CD4-positive, alpha-beta T cell (primary cell): ENCODE measurements at regions of chr9 and their contacts with region 1.

Region 1: DNA sequence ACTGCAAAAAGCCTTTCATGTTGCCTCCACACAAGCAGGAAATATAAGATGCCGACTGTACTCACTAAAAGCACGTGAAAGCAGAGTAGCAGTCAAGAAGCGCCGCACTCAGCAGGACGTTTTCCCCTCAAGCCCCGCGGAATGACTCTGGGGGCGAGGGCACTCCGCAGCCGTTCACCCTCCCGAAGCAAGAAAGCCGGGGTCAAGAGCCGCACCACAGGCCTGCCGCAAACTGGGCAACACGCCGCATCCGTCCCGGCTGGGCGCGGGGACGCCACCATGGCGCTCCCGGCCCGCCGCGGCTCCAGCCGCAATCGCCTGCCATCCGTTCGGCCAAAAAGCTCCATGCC is 364 bp downstream of the RPS6 start:
- DNase-seq: peak in 8 of 14 experiments; percentile 23 to 73 (median 36)
- ATAC-seq: peak; percentile 49
- H3K4me3 ChIP-seq: peak overlapping the region; percentile 60
- H3K4me3 Mint-ChIP-seq: peak overlapping the region; percentile 90
- H3K27ac ChIP-seq: peak overlapping the region; percentile 88 to 90
- H3K27ac Mint-ChIP-seq: peak overlapping the region; percentile 94
- H3K4me1 ChIP-seq: peaks cover 23% of the 10 kb centered on the region
- H3K4me1 Mint-ChIP-seq: peaks cover 52% of the 10 kb centered on the region
- H3K27me3 ChIP-seq: no peaks in the 10 kb centered on the region
- H3K27me3 Mint-ChIP-seq: no peaks in the 10 kb centered on the region
- CTCF ChIP-seq: no peak

Region 2: DNA sequence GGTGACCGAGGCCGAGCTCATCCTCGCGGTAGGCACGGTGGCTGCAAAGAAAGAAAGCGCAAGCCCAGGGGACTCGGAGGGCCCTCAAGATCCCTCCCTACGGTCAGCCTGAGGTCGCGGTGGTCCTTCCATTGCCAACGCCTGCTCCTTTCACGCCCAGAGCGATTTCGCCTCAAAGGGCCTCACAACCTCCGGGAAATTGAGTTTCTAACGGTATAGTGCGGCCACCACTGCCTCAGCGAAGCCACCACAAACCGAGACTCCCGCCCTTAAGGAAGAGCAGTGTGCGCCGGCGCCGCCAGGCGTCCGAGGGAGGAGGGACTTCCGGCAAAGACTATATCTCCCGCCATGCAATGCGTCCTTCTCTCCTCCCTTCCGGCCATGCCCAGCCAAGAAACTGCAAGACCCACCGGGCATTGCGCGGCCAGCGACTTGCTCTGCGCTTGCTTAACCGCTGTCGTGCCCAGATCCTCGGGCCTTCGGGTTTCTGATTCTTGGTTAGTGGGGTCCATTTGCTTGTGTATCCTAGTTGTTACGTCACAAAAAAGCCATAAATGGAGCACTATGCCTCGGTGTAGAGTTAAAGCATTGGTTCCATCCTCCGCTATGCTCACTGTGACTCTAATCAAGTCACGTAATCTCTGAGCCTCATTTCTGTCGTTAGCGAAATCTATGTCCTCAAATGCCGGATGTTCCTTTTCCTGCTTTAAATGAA is 276.9 kb before region 1 on chr9 and contains the start of gene HAUS6:
- CTCF ChIA-PET with region 1: no interaction called
- POLR2A ChIA-PET with region 1: no interaction called
- intact Hi-C with region 1: loop called in 1 of 2 experiments (anchors 2 kb)
- DNase-seq: peak; percentile 81 to 99 (median 92)
- ATAC-seq: peak; percentile 89
- H3K4me3 ChIP-seq: peak within 1 kb of the TSS; percentile 85
- H3K4me3 Mint-ChIP-seq: peak within 1 kb of the TSS; percentile 99
- H3K27ac ChIP-seq: peak within 1 kb of the TSS; percentile 81 to 85
- H3K27ac Mint-ChIP-seq: peak within 1 kb of the TSS; percentile 98
- H3K4me1 ChIP-seq: peaks cover 20% of the 10 kb centered on the region
- H3K4me1 Mint-ChIP-seq: peaks cover 31% of the 10 kb centered on the region
- H3K27me3 ChIP-seq: no peaks in the 10 kb centered on the region
- H3K27me3 Mint-ChIP-seq: no peaks in the 10 kb centered on the region
- CTCF ChIP-seq: peak; percentile 35
- total RNA-seq, gene HAUS6: 14.9 to 17.2 TPM

Region 3: DNA sequence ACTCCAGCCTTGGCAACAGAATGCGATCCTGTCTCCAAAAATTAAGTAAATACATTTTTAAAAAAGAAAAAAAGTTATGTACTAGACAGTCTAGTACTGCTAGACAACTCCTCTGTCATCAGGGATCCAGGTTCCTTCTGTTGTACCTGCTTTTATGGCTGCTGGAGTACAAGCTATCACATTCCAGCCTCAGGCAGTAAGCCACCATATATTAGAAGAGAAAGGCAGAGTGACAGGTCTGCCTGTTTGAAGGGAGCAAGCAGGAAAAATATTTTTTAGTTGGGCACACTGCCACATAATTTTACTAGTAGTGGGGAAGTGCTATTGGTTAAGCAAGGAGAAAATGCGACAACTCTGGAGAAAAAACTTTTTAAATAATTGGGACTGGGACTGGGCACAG is 10.6 kb before region 1 on chr9:
- CTCF ChIA-PET with region 1: no interaction called
- POLR2A ChIA-PET with region 1: interaction called, 11 read pairs
- intact Hi-C with region 1: no loop called
- DNase-seq: no peak
- ATAC-seq: no peak
- H3K4me3 ChIP-seq: no peak overlapping the region
- H3K4me3 Mint-ChIP-seq: no peak overlapping the region
- H3K27ac ChIP-seq: no peak overlapping the region
- H3K27ac Mint-ChIP-seq: no peak overlapping the region
- H3K4me1 ChIP-seq: no peaks in the 10 kb centered on the region
- H3K4me1 Mint-ChIP-seq: no peaks in the 10 kb centered on the region
- H3K27me3 ChIP-seq: no peaks in the 10 kb centered on the region
- H3K27me3 Mint-ChIP-seq: no peaks in the 10 kb centered on the region
- CTCF ChIP-seq: no peak

Region 4: DNA sequence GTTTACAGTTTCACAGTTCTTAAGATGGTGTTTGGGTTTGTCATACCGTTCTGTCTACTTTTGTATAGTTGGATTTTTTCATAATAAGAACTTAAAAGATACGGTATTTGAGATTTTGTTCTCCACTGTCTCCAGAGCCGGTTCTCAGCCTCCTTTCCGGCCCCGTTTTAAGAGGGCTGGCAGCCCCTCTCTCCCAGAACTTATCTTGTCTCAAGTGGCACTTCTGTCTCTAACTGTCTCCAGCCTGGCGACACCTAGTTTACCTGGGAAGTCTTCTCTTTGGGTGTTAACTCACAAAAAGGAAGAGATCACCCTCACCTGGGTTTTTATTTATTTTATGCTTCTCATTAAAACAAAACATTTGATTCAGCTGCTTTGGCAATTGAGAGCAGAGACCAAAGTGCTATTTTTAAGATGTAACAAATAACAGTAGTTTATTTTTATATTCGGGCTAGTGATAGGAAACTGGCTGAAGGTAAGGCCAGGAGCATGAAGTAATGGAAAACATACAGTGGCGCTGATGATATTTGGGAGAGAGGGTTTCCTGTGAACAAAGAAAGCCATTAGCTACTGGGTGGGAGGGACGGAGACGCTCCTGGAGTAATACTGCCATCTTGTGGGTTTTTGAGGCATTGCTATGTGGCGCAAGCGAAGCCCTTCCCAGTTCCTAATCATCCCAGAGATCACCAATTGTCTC is 77.5 kb after region 1 on chr9:
- CTCF ChIA-PET with region 1: no interaction called
- POLR2A ChIA-PET with region 1: interaction called, 13 read pairs
- intact Hi-C with region 1: loop called (anchors 2 to 5 kb)
- DNase-seq: peak; percentile 26 to 83 (median 46)
- ATAC-seq: peak; percentile 98
- H3K4me3 ChIP-seq: peak overlapping the region; percentile 10
- H3K4me3 Mint-ChIP-seq: peak overlapping the region; percentile 0
- H3K27ac ChIP-seq: no peak overlapping the region
- H3K27ac Mint-ChIP-seq: no peak overlapping the region
- H3K4me1 ChIP-seq: peaks cover 8% of the 10 kb centered on the region
- H3K4me1 Mint-ChIP-seq: peaks cover 7% of the 10 kb centered on the region
- H3K27me3 ChIP-seq: no peaks in the 10 kb centered on the region
- H3K27me3 Mint-ChIP-seq: no peaks in the 10 kb centered on the region
- CTCF ChIP-seq: peak; percentile 97